ENCODE measurements at regions of chr16 and their contacts with region 1.

Region 1: GRCh38 chr16:50681021-50681885 is at the start of gene SNX20:
- DNase-seq: peak; percentile 73
- CTCF ChIP-seq: no peak

Region 2: DNA sequence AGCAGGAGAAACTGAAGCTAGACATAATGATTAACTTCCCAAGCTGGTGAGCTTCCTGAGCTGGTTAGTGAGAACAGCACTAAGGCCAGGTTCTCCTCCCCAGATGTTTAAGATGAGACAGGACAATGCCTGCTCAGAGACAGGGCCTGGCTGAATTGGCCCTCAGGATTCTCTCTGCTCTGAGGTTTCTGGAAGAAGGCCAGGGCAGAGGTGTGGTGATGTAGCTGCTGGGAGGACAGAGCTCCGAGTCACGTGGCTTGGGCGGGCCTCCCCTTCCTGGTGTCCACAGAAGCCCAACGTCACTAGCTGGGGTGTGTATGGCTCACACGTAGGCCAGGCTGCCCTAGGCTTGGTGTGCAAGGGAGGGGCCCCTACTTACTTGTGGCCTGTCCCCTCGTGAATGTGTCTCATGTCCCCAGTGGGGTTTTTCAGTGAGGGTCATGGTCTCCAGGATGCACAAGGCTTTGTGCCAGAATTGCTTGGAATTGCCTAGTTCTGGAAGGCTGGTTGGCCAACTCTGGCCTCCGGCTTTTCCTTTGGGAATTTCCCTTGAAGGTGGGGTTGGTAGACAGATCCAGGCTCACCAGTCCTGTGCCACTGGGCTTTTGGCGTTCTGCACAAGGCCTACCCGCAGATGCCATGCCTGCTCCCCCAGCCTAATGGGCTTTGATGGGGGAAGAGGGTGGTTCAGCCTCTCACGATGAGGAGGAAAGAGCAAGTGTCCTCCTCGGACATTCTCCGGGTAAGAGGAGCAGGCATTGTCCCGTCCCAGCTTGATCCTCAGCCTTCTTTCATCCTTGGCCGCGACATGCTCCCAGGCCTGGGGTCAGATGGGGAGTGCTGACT is 15.5 kb after region 1 on chr16:
- CTCF ChIA-PET with region 1: interaction called, 22 read pairs
- POLR2A ChIA-PET with region 1: interaction called, 6 read pairs
- DNase-seq: peak; percentile 85
- CTCF ChIP-seq: no peak

Region 3: DNA sequence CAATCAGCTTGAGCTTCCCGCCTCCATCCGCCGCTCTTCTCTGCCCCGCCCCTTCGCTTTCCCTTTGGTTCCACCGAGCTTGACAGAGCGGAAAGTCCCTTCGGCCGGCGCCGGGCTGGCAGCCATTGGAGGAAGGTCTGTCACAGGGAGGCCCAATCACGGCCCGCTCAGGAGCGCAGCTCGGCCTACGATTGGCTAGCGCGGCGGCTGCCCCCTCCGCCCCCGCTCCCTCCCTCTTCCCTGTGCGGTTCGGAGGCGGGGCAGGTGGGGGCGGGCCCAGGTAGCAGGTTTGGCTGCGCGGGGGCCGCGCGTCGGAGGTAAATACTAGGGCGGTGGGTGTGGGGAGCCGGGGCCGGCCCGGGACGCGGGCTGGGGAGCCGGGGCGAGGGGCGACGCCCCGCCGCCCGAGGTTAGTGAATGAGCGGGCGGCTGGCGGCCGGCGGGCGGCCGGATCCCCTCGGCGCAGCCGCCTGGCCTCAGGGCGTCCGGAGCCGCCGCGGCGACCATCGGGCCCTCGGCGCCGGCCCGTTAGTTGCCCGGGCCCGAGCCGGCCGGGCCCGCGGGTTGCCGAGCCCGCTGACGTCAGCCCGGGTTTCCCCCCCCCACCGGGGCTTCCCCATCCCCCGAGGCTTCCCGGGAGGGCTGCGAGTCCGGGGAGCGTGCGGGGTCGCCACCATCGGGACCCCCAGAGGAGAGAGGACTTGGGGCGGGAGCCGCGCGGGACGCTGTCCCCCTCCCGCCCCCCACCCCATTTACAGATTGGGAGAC is 60.7 kb after region 1 on chr16 and contains the start of gene CYLD:
- CTCF ChIA-PET with region 1: interaction called, 5 read pairs
- POLR2A ChIA-PET with region 1: interaction called, 10 read pairs
- DNase-seq: peak; percentile 98
- CTCF ChIP-seq: no peak